AG04449 (cell line): ENCODE measurements at regions of chr16 and their contacts with region 1.

Region 1: DNA sequence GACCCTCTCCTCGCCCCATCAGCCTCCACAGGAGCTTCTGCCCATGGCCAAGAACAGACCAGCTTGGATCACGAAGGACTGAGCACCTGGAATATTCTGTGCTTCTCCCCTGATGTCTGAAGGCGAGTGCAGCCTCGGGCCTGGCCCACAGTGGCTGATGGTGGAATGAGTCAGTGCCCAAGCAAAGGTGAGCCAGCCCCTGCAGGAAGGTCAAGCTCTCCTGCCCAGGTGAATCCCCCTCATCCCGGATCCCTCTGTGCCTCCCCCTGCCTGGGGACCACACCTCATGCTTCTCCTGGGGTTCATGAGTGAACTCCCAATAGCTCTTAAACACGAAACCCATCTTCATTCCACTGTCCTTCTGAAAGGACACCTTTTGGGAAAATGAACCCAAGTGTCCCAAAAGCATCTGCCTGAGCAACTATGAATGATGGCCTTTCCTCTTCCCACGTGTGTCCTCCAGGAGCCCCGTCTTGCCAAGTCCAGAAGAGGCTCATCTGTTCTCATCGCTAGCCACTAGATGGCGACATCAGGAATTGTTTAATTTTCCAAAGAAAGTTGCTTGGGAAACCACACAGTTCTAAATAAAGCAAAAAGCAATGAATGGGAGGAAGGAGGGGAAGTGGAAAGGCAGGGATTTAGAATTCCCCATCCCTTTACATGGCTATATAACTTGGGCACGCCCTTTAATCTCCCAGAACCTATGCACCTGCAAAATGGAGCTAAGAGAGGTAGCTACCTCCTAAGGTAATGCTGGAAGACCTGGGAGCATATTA is 9.2 kb upstream of the CDH5 start:
- DNase-seq: peak; percentile 47
- H3K4me3 ChIP-seq: no peak overlapping the region
- CTCF ChIP-seq: peak; percentile 52

Region 2: GRCh38 chr16:66264311-66265047 is 92.9 kb before region 1 on chr16:
- CTCF ChIA-PET with region 1: no interaction called
- POLR2A ChIA-PET with region 1: no interaction called
- DNase-seq: no peak
- H3K4me3 ChIP-seq: no peak overlapping the region
- CTCF ChIP-seq: no peak

Region 3: GRCh38 chr16:66311306-66311705 is 46.0 kb before region 1 on chr16:
- CTCF ChIA-PET with region 1: no interaction called
- POLR2A ChIA-PET with region 1: no interaction called
- DNase-seq: no peak
- H3K4me3 ChIP-seq: no peak overlapping the region
- CTCF ChIP-seq: no peak

Region 4: GRCh38 chr16:66344533-66345145 is 12.7 kb before region 1 on chr16:
- CTCF ChIA-PET with region 1: interaction called, 218 read pairs
- POLR2A ChIA-PET with region 1: no interaction called
- DNase-seq: no peak
- H3K4me3 ChIP-seq: no peak overlapping the region
- CTCF ChIP-seq: peak; percentile 50

Region 5: DNA sequence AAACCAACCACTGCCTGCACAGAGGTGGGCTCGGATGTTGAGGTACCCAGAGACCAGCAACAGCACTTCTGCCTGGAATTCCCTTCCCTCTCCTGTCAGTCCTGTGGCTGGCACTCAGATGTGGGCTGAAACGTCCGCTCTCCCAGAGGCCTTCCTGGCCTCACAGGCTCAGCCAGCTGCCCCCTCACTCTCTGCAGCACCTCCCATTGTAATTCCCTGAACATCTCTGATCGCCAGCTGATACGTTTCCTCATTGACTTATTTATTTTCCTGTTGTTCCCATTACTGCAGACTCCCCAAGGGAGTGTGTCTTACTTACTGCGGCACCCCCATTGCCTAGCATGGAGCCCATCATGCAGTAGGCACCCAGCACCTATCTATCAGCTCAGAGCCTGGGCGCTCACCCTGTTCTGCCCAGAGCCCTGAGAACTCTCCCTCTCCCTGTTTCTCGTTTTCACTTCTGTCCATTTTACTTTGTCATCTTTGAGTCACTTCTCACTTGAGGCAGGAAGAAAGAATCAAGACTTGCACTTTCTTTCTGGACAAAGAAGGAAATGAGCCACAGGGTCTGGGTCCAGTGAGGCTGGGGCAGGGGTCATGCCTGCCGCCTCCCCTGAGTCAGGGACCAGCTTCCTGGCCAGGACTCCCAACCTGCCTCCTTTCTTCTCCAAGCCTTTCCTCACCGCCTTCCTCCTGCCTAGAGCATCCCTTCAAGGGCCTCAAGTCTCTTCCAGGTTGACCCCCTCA is 19.4 kb after region 1 on chr16:
- CTCF ChIA-PET with region 1: interaction called, 134 read pairs
- POLR2A ChIA-PET with region 1: no interaction called
- DNase-seq: no peak
- H3K4me3 ChIP-seq: no peak overlapping the region
- CTCF ChIP-seq: no peak

Region 6: GRCh38 chr16:66416939-66417700 is 59.8 kb after region 1 on chr16:
- CTCF ChIA-PET with region 1: interaction called, 10 read pairs
- POLR2A ChIA-PET with region 1: no interaction called
- DNase-seq: no peak
- H3K4me3 ChIP-seq: no peak overlapping the region
- CTCF ChIP-seq: no peak

Region 7: DNA sequence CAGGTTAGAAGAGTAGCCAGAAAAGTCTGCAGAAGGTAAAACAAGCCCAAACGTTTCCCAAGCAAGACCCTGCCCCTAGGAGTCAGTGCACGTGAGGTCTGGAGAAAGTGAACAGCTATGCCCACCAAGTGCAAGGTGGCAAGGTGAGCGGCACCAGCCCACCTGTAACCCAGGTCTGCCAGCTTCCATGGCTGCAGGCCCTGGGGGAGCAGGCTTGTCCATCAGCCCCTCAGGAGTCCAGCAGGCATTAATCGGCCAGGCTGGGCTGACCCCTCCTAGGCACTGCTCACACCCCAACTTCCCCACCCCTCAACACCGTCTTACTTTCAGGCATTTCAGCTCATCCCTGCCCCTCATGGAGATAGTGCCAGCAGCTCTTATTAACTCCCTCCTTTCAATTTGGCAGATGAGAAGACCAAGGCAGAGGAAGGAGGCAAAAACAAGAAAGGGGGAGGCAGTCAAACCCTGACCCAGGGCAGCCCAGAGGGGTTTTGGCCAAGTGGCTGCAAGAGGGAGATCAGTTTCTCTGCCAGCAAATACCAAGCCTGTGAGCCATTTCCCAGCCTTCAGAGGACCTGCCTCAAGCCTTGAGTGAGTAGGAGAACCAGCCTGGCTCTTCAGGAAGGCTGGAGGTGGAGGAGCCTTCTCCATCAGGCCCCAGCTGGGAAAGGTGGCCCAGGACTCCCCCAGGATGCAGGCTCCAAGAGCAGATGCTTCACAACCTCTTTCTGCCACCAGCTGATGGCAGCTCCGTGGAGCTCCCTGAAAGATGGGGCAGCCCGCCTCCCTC is 84.4 kb after region 1 on chr16:
- CTCF ChIA-PET with region 1: no interaction called
- POLR2A ChIA-PET with region 1: no interaction called
- DNase-seq: no peak
- H3K4me3 ChIP-seq: no peak overlapping the region
- CTCF ChIP-seq: no peak

Region 8: DNA sequence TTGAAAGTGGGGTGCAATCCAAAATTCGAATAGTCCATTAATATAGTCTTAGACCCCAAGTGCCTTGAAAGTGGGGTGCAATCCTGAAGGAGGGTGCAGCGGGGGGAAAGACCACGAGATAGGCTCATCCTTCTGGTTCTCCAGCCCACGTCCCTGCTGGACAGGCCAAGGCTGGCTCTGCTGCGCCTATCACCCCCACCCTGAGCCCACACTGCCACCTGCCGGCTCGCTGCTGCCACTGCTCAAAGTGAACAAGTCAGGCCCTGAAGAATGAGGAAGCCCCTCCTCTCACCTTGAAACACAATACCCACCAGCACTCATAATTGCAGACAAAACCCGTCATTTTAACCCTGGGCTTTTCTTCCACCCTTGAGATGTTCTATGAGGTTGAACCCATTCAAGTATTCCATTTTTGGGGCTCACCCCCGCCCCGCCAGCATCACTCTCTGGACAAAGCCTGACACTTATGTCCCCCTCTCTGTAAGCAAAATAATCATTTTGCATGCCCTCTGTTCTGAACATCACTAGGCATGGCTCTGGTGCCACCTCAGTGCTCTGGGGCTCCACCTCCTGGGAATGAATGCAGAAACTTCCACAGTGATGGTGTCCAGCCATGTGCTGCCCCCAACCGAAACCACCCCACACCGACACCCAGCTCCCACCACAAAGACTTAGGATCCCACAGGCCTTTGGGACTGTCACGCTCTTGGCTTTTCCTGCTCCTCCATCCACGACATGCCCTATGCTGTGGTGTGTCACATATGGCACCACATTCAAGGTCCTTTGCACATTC is 126.5 kb after region 1 on chr16:
- CTCF ChIA-PET with region 1: interaction called, 45 read pairs
- POLR2A ChIA-PET with region 1: no interaction called
- DNase-seq: no peak
- H3K4me3 ChIP-seq: no peak overlapping the region
- CTCF ChIP-seq: peak; percentile 99

Region 9: DNA sequence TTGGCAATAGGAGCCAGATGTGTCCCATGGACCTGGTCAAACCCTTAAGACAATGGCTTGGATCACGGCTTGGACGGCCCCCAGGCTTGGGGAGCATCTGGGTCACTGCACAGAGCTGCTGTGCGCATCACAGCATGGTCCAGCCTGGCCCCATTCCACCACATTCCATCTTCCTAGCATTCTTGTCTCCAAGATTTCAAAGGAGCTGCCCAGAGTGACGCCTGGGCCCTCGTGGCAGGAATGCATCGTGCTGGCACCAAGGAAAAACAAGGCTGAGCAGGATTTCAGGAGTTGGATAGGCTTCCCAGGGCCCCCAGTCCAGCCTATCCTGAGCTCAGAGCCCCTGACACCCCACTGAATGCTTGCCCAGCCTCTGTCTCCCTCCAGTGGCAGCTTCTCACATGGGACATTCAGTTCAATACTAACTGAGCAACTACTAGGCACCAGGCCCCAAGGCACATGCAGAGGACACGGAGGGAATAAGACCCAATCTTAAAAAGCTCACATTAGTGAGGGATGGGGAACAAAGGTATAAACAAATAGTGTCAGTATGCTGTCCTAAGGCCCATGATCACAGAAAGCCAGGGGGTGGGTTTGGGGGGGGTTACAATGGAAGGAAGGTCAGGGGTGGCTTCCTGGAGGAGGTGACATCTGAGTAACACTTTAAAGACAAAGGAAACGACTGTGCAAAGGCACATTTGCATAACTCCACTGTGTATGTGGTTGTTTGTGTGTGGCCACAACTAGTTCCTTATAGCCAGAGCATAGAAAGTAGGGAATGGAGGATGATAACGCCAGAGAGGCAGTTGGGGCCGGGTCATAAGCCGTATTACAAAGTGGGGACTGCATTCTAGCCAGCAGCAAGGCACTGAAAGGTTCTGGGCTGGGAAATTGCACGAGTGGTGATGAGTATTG is 158.5 kb after region 1 on chr16:
- CTCF ChIA-PET with region 1: interaction called, 10 read pairs
- POLR2A ChIA-PET with region 1: no interaction called
- DNase-seq: no peak
- H3K4me3 ChIP-seq: no peak overlapping the region
- CTCF ChIP-seq: peak; percentile 29